ENCODE measurements at regions of chr15 and their contacts with region 1.

Region 1: GRCh38 chr15:27587810-27588209 is 511.3 kb downstream of the OCA2 start:
- DNase-seq: no peak
- H3K4me3 ChIP-seq: no peak overlapping the region
- H3K27ac ChIP-seq: no peak overlapping the region
- H3K4me1 ChIP-seq: no peaks in the 10 kb centered on the region
- H3K27me3 ChIP-seq: no peaks in the 10 kb centered on the region
- CTCF ChIP-seq: no peak
- POLR2A ChIP-seq: no peak

Region 2: GRCh38 chr15:27401471-27401870 is 186.3 kb before region 1 on chr15:
- intact Hi-C with region 1: no loop called
- DNase-seq: no peak
- H3K4me3 ChIP-seq: no peak overlapping the region
- H3K27ac ChIP-seq: no peak overlapping the region
- H3K4me1 ChIP-seq: no peaks in the 10 kb centered on the region
- H3K27me3 ChIP-seq: no peaks in the 10 kb centered on the region
- CTCF ChIP-seq: no peak
- POLR2A ChIP-seq: no peak

Region 3: GRCh38 chr15:27463525-27464088 is 124.2 kb before region 1 on chr15:
- intact Hi-C with region 1: loop called (anchors 10 kb)
- DNase-seq: no peak
- H3K4me3 ChIP-seq: no peak overlapping the region
- H3K27ac ChIP-seq: no peak overlapping the region
- H3K4me1 ChIP-seq: no peaks in the 10 kb centered on the region
- H3K27me3 ChIP-seq: no peaks in the 10 kb centered on the region
- CTCF ChIP-seq: no peak
- POLR2A ChIP-seq: no peak